CD4-positive, alpha-beta memory T cell (primary cell): ENCODE measurements at regions of chr20 and their contacts with region 1.

Region 1: DNA sequence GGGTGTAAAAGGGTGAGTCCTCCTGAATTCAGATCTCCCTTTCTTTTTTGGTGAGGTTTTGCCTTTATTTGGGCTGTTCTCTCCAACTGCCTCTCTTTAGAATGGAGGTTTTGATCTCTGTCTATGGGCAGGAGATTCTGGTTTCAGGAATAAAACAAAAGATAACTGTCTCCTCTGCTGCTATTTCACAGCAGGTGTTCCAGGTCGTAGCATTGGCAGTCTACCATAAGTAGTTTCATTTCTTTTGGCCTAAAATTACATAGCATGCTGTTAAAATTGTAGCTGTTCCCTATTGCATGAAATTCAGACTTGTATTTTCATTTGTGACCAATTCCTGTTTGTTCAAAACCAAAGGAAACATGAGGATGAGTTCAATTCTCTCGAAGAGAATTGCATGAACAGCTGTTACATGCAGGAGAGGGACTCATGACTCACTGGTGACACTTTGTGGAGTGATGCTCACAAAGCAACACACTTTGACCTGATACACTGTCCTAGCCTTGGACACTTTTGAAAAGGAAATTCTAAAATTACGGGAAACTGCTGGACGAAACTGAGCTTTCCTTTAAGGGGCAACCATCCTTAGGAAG is 76.8 kb upstream of the SIRPG start:
- DNase-seq: peak in 4 of 5 donors; percentile 40 to 45 (median 42)
- H3K4me3 ChIP-seq: no peak overlapping the region
- H3K4me3 Mint-ChIP-seq: peak overlapping the region in 2 of 8 donors; percentile 17 to 30
- H3K27ac ChIP-seq: no peak overlapping the region
- H3K27ac Mint-ChIP-seq: peak overlapping the region in 3 of 7 donors; percentile 8 to 25 (median 25)
- H3K4me1 ChIP-seq: peaks cover 33% of the 10 kb centered on the region
- H3K4me1 Mint-ChIP-seq: peaks cover 7 to 23% (median 13%) of the 10 kb centered on the region in 4 donors
- H3K27me3 ChIP-seq: no peaks in the 10 kb centered on the region
- H3K27me3 Mint-ChIP-seq: peaks cover 0 to under 1% of the 10 kb centered on the region in 2 donors

Region 2: DNA sequence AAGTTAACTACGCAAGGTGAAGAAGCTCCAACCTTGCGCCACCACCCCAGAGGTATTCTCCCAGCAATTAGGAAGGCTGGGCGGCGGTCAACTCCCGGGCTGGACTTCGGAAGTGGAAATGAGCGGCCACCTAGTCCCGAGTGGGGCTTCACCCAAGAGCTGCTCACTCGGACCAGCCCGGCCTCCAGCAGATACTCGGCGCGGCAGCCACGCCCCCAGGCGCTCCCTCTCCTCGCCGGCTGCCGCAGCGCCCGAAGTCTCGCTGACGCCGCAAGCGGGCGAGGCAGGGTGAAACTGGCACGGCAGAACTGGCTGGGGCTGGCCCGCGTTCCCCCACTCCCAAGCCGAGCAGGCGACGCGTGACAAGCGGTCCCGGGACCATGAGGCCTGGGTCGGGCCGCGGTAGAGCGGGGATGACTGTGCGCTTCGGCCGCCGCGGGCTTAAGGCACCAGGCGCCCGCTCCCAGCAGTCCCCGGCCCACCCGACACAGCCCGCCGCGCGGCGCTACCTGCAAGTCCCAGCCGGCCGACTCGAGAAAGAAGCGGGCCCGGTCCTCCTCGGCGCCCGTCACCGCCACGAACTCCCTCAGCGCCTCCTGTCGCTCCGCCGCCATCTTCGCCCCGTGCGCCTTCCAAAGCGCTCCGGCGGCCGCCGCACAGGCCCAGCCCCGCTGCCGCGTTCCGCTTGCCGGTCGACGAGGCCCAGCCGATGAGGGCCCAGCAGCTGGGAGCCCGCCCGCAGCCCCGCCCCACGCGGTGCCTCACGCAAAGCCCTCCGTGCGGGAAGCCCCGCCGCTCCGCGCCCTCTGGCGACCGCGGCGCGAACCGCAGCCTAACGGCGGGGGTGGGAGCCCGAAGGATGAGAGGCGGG is 267.9 kb before region 1 on chr20 and contains the start of gene NSFL1C:
- CTCF ChIA-PET with region 1: interaction called, 7 read pairs
- POLR2A ChIA-PET with region 1: no interaction called
- intact Hi-C with region 1: loop called (anchors 2 kb)
- DNase-seq: peak; percentile 95 to 99 (median 97)
- H3K4me3 ChIP-seq: peak within 1 kb of the TSS; percentile 53 to 65
- H3K4me3 Mint-ChIP-seq: peak within 1 kb of the TSS; percentile 78 to 93 (median 88)
- H3K27ac ChIP-seq: peak within 1 kb of the TSS; percentile 89
- H3K27ac Mint-ChIP-seq: peak within 1 kb of the TSS; percentile 66 to 95 (median 91)
- H3K4me1 ChIP-seq: peaks cover 41% of the 10 kb centered on the region
- H3K4me1 Mint-ChIP-seq: peaks cover 34 to 49% (median 40%) of the 10 kb centered on the region in 4 donors
- H3K27me3 ChIP-seq: no peaks in the 10 kb centered on the region
- H3K27me3 Mint-ChIP-seq: peaks cover 1 to 5% of the 10 kb centered on the region in 2 donors
- total RNA-seq, gene NSFL1C: 57.5 to 65.8 TPM

Region 3: DNA sequence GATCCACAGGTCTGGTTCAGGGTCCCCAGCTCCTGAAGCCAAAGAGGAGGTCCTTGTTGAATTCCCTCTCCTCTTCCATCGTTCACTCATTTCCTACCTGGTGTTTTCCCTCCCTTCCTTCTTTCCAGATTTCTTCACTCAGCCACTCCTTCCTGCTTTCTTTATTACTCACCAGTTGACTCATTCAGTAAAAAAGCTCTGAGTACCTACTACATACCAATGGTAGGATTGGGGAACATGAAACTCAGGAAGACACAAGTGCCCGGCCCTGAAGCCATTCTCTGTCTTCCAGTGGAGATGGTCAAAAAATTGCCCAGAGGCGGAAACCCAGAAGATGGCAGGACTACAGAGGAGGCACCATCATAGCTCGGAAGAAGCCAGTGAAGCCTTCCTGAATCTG is 255.8 kb before region 1 on chr20:
- CTCF ChIA-PET with region 1: no interaction called
- POLR2A ChIA-PET with region 1: no interaction called
- intact Hi-C with region 1: no loop called
- DNase-seq: no peak
- H3K4me3 ChIP-seq: no peak overlapping the region
- H3K4me3 Mint-ChIP-seq: no peak overlapping the region
- H3K27ac ChIP-seq: no peak overlapping the region
- H3K27ac Mint-ChIP-seq: no peak overlapping the region
- H3K4me1 ChIP-seq: no peaks in the 10 kb centered on the region
- H3K4me1 Mint-ChIP-seq: no peaks in the 10 kb centered on the region
- H3K27me3 ChIP-seq: peaks cover 4% of the 10 kb centered on the region
- H3K27me3 Mint-ChIP-seq: peaks cover 19 to 21% of the 10 kb centered on the region in 2 donors

Region 4: DNA sequence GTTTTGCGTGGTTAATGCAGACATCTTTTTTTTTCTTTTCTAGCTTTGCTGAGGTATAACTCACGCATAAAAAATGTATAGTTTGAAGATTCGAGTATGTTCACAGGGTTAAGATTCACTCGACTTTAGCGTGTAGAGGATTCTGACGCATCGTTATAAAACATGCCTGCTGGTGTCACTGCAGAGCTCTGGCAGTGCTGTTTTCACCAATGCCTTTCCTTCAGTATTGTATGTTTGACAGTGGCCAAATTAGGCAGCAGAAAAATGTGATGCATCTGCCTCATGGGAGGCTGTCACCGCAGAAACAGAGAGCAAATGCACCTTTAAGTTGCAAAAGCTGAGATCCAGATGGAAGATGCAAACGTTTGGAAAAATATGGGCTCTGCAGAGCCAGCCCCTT is 225.1 kb before region 1 on chr20:
- CTCF ChIA-PET with region 1: interaction called, 22 read pairs
- POLR2A ChIA-PET with region 1: no interaction called
- intact Hi-C with region 1: loop called (anchors 1 kb)
- DNase-seq: peak in 4 of 5 donors; percentile 8 to 28 (median 14)
- H3K4me3 ChIP-seq: no peak overlapping the region
- H3K4me3 Mint-ChIP-seq: no peak overlapping the region
- H3K27ac ChIP-seq: no peak overlapping the region
- H3K27ac Mint-ChIP-seq: no peak overlapping the region
- H3K4me1 ChIP-seq: no peaks in the 10 kb centered on the region
- H3K4me1 Mint-ChIP-seq: peaks cover 0 to 2% (median 0%) of the 10 kb centered on the region in 4 donors
- H3K27me3 ChIP-seq: no peaks in the 10 kb centered on the region
- H3K27me3 Mint-ChIP-seq: peaks cover 14 to 20% of the 10 kb centered on the region in 2 donors

Region 5: GRCh38 chr20:1555952-1556351 is 178.4 kb before region 1 on chr20:
- CTCF ChIA-PET with region 1: interaction called, 68 read pairs
- POLR2A ChIA-PET with region 1: interaction called, 7 read pairs
- intact Hi-C with region 1: loop called (anchors 1 kb)
- DNase-seq: peak in 4 of 5 donors; percentile 11 to 30 (median 28)
- H3K4me3 ChIP-seq: no peak overlapping the region
- H3K4me3 Mint-ChIP-seq: no peak overlapping the region
- H3K27ac ChIP-seq: no peak overlapping the region
- H3K27ac Mint-ChIP-seq: no peak overlapping the region
- H3K4me1 ChIP-seq: no peaks in the 10 kb centered on the region
- H3K4me1 Mint-ChIP-seq: peaks cover 0 to 9% (median 7%) of the 10 kb centered on the region in 4 donors
- H3K27me3 ChIP-seq: no peaks in the 10 kb centered on the region
- H3K27me3 Mint-ChIP-seq: peaks cover 0 to 3% of the 10 kb centered on the region in 2 donors

Region 6: DNA sequence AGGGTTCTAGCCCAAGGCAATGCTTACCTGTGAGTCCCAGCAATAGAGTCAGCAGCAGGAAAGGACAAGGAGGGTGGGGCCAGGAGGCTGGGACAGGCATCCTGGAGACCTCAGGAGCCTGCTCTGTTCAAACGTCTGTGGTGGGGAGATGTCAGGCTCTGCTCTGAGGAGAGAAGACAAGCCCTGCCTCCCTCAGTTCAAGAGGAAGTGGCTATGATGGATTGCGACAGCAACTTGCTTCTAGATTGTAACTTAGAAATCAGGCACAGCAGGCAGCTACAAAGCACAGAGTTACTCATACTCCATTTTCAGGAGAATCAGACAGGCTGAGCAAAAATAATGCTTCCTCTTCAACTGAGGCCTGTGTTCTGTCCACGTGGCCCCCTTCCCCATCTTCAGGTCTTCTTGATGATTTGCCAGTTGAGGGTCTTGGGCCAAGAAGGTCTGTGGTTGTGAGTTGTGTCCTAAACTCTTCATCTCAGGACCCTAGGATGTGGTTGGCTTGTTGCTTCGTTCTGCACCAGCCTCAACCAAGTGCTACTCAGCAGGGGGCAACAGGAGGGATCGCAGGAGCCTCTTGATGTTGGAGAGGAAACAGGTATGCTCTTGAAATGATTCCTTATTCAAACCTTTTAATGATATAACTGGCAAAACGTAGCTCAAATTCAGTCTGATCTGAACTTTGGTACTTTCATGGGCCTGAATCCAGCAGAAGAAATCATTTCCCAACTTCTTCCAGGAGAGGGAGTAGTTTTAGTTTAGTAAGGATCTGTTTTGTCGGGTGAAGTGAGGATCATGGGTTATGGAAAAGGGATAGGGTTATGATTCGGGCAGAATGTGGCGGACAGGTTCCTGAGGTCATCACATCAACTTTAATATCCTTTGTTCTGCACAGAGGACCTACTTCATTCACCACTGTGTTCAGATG is 145.6 kb before region 1 on chr20:
- CTCF ChIA-PET with region 1: no interaction called
- POLR2A ChIA-PET with region 1: no interaction called
- intact Hi-C with region 1: loop called (anchors 2 kb)
- DNase-seq: peak in 2 of 5 donors; percentile 43
- H3K4me3 ChIP-seq: no peak overlapping the region
- H3K4me3 Mint-ChIP-seq: peak overlapping the region in 4 of 8 donors; percentile 53 to 73 (median 58)
- H3K27ac ChIP-seq: no peak overlapping the region
- H3K27ac Mint-ChIP-seq: peak overlapping the region in 3 of 7 donors; percentile 71 to 87 (median 85)
- H3K4me1 ChIP-seq: peaks cover 17% of the 10 kb centered on the region
- H3K4me1 Mint-ChIP-seq: peaks cover 0 to 31% (median 15%) of the 10 kb centered on the region in 4 donors
- H3K27me3 ChIP-seq: no peaks in the 10 kb centered on the region
- H3K27me3 Mint-ChIP-seq: no peaks in the 10 kb centered on the region

Region 7: DNA sequence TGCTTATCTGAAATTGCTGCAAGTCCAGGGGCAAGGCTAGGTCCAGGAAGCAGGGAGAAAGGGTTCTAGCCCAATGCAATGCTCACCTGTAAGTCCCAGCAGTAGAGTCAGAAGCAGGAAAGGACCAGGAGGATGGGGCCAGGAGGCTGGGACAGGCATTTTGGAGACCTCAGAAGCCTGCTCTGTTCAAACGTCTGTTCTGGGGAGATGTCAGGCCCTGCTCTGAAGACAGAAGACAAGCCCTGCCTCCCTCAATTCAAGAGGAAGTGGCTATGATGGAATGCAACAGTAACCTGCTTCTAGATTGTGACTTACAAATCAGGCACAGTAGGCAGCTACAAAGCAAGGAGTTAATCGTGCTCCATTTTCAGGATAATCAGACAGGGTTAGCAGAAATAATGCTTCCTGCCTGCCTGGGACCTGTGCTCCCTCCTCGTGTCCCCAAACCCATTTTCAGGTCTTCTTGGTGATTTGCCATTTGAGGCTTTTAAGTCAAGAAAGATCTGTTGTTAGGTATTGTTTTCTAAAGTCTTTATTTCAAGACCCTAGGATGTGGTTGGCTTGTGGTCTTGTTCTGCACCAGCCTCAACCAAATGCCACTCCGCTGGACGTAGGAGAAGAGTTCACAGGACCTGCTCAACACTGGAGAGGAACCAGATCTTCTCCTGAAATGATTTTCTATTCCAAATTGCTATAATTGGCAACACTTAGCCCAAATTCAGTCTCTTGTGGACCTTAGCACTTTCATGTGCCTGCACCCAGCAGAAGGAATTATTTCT is 76.6 kb before region 1 on chr20 and contains the start of gene SIRPG:
- CTCF ChIA-PET with region 1: interaction called, 6 read pairs
- POLR2A ChIA-PET with region 1: interaction called, 4 read pairs
- intact Hi-C with region 1: loop called (anchors 5 kb)
- DNase-seq: peak in 3 of 5 donors; percentile 37 to 45 (median 39)
- H3K4me3 ChIP-seq: peak within 1 kb of the TSS; percentile 60 to 79
- H3K4me3 Mint-ChIP-seq: peak within 1 kb of the TSS; percentile 87 to 97 (median 92)
- H3K27ac ChIP-seq: peak within 1 kb of the TSS; percentile 78
- H3K27ac Mint-ChIP-seq: peak within 1 kb of the TSS; percentile 89 to 96 (median 95)
- H3K4me1 ChIP-seq: peaks cover 96% of the 10 kb centered on the region
- H3K4me1 Mint-ChIP-seq: peaks cover 71 to 93% (median 85%) of the 10 kb centered on the region in 4 donors
- H3K27me3 ChIP-seq: no peaks in the 10 kb centered on the region
- H3K27me3 Mint-ChIP-seq: no peaks in the 10 kb centered on the region
- total RNA-seq, gene SIRPG: 32.4 to 34.9 TPM

Region 8: DNA sequence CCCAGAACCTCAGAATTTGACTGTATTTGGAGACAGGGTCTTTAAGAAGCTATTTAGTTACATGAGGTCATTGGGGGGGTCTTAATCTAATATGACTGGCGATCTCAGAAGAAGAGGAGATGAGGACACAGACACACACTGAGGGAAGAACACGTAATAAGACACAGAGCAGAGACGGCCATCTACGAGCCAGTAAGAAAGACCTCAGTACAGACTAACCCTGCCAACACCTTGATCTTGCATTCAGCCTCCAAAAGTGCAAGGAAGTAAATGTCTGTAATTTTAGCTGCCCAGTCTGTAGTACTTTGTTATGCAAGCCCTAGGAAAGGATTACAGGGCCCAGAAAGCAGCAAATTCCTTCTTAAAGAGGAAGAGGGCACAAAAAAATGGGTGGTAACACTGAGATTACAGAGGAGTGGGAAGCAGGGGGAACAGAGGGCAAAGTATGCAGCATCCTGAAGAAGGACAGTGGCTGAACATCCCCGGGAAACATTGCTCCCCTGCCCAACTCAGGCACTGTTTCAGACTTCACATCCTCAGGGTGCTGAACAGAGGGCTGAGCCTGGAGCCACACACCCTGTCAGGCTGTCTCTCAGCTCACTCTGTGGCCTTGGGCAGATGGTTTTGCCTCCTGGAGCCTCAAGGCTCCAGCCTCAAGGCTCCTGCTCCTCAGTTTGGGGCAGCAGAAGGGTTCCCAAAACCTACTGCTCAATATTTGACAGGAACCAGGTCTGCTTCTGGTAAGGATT is 48.9 kb before region 1 on chr20:
- CTCF ChIA-PET with region 1: interaction called, 6 read pairs
- POLR2A ChIA-PET with region 1: no interaction called
- intact Hi-C with region 1: loop called (anchors 5 kb)
- DNase-seq: peak in 1 of 5 donors; percentile 41
- H3K4me3 ChIP-seq: peak overlapping the region; percentile 34 to 52
- H3K4me3 Mint-ChIP-seq: peak overlapping the region; percentile 66 to 88 (median 77)
- H3K27ac ChIP-seq: peak overlapping the region; percentile 26
- H3K27ac Mint-ChIP-seq: peak overlapping the region; percentile 68 to 88 (median 82)
- H3K4me1 ChIP-seq: peaks cover 35% of the 10 kb centered on the region
- H3K4me1 Mint-ChIP-seq: peaks cover 18 to 47% (median 39%) of the 10 kb centered on the region in 4 donors
- H3K27me3 ChIP-seq: no peaks in the 10 kb centered on the region
- H3K27me3 Mint-ChIP-seq: no peaks in the 10 kb centered on the region

Region 9: DNA sequence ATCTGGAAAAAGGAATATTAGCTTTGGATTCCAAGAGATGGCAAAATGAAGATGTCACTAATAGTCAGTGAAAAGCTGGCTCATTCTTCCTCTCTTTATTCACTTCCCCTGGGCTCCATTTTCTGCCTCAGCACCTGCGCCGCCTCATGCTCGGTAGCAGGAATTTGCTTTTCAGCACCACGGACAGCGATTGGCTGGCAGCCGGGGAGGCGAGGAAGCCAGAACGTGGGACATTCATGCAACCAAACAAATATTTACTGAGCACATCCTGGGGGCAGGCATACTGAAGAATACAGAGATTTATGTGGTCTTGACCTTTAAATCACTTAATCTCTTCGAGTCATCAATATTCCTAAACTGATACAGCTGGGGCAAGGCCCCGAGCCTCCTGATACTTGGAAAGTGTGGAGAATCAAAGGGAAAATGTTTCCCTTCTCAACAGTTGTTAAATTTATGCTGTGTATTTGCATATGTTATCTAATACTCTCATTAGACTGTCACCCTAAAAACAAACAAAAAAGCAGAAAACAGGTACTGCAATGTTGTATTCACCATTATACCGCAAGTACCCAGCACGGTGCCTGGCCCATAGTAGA is 271.6 kb after region 1 on chr20:
- CTCF ChIA-PET with region 1: no interaction called
- POLR2A ChIA-PET with region 1: no interaction called
- intact Hi-C with region 1: no loop called
- DNase-seq: peak; percentile 39 to 51 (median 42)
- H3K4me3 ChIP-seq: no peak overlapping the region
- H3K4me3 Mint-ChIP-seq: no peak overlapping the region
- H3K27ac ChIP-seq: no peak overlapping the region
- H3K27ac Mint-ChIP-seq: no peak overlapping the region
- H3K4me1 ChIP-seq: no peaks in the 10 kb centered on the region
- H3K4me1 Mint-ChIP-seq: no peaks in the 10 kb centered on the region
- H3K27me3 ChIP-seq: peaks cover 4% of the 10 kb centered on the region
- H3K27me3 Mint-ChIP-seq: peaks cover 32 to 40% of the 10 kb centered on the region in 2 donors